Dorsolateral prefrontal cortex (tissue), 120 donors: ENCODE measurements at regions of chr19 and their contacts with region 1.

Region 1: DNA sequence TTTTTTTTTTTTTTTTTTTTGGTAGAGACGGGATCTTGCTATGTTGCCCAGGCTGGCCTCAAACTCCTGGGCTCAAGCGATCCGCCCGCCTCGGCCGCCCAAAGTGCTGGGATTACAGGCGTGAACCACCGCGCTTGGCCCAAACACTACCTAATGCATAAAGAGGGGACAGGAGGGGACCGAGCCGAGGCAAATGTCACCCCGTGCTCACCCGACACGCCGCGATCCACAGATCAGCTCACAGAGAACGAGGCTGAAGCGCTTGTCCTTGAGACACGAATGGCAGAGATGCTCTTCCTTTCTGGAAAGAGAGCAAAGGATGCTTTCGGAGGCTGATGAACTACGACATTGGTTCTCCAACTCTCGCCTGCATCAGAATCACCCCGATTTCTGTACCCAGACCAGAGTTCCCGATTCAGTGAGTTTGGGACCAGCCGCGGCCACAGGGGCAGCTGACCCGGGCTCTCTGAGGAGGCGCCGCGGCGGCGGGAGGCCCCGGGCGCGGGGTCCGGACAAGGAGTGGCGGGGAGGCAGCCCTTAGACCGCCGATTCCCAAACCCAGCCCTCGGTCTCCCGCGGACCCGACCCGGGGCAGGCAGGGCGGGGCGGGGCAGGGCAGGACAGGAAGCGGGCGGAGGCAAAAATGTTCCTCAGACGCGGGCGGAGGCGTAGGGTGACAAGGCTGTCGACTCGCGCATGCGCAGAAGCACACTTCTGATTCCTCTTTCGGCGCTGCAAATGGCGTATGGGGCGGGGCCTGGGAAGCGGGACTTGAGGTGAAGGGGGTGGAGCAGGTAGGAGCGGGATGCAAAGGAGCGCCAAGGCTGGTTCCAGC is at the start of gene ZNF699:
- DNase-seq: peak; percentile 93 to 98 (median 96)
- H3K4me3 ChIP-seq: peak within 1 kb of the TSS; percentile 61 to 100 (median 94)
- H3K27ac ChIP-seq: peak within 1 kb of the TSS; percentile 51 to 98 (median 92)
- H3K27me3 ChIP-seq: no peaks in the 10 kb centered on the region
- CTCF ChIP-seq: peak in 23 of 56 donors; percentile 4 to 49 (median 24)
- total RNA-seq, gene ZNF699: 4.8 to 14.5 (median 8.3) TPM

Region 2: GRCh38 chr19:8988204-8988603 is 321.2 kb before region 1 on chr19:
- intact Hi-C with region 1: no loop called
- DNase-seq: no peak
- H3K4me3 ChIP-seq: no peak overlapping the region
- H3K27ac ChIP-seq: no peak overlapping the region
- H3K27me3 ChIP-seq: peaks cover 0 to 13% (median 0%) of the 10 kb centered on the region in 45 donors
- CTCF ChIP-seq: peak in 3 of 56 donors; percentile 13 to 20 (median 17)

Region 3: DNA sequence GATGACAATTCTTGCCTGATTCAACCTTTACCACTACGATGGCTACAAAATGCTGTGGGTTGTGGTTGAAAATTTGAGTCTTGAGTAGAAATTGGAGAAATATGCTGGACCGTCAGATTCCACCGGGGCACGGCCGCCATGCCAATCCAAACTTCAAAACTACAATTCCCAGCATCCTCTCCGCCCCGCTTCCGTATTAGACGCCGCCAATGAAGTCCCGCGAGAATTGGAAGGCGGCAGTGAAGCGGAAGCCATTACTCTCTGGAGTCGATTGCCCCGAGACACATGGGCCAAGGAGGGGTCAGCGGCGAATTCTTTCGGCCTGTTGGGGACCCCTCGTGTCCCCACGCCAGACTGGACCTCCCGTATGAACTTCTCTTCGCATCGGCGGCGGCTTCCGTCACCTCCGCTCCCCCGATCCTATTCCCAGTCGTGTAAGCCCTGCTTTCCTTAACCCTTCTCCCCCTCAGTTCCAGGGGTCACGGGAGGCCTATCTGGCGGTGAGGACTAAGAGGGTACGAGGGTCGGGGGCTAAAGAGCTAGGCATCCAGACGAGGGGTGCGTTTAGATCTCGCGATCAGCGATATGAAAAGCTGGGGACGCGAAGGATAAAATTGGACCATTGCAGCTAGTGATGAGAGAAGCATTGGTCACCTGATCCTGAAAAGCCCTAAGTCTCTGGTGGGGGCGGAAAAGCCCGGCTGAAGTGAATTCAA is 169.0 kb before region 1 on chr19 and contains the start of gene ZNF317:
- intact Hi-C with region 1: loop called in 1 of 2 experiments (anchors 5 kb)
- DNase-seq: peak; percentile 78 to 97 (median 91)
- H3K4me3 ChIP-seq: peak within 1 kb of the TSS; percentile 65 to 99 (median 91)
- H3K27ac ChIP-seq: peak within 1 kb of the TSS; percentile 35 to 96 (median 86)
- H3K27me3 ChIP-seq: no peaks in the 10 kb centered on the region
- CTCF ChIP-seq: peak in 34 of 56 donors; percentile 12 to 62 (median 32)
- total RNA-seq, gene ZNF317: 22.6 to 39.4 (median 30.9) TPM

Region 4: DNA sequence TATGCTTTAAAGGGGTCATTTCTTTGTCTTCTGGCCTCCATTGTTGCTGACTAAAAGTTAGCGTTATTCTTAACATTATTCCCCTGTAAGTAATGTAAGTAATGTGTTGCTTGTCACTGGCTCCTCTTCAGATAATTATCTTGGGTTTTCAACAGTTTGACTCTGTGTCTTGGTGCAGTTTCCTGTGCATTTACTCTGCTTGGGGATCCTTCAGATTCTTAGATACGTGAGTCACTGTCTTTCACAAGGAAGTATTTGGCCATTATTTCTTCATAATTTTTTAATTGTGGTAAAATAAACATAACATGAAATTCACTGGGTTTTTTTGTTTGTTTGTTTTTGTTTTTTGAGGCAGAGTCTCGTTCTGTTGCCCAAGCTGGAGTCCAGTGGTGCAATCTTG is 144.1 kb before region 1 on chr19:
- intact Hi-C with region 1: no loop called
- DNase-seq: no peak
- H3K4me3 ChIP-seq: no peak overlapping the region
- H3K27ac ChIP-seq: no peak overlapping the region
- H3K27me3 ChIP-seq: no peaks in the 10 kb centered on the region
- CTCF ChIP-seq: no peak

Region 5: DNA sequence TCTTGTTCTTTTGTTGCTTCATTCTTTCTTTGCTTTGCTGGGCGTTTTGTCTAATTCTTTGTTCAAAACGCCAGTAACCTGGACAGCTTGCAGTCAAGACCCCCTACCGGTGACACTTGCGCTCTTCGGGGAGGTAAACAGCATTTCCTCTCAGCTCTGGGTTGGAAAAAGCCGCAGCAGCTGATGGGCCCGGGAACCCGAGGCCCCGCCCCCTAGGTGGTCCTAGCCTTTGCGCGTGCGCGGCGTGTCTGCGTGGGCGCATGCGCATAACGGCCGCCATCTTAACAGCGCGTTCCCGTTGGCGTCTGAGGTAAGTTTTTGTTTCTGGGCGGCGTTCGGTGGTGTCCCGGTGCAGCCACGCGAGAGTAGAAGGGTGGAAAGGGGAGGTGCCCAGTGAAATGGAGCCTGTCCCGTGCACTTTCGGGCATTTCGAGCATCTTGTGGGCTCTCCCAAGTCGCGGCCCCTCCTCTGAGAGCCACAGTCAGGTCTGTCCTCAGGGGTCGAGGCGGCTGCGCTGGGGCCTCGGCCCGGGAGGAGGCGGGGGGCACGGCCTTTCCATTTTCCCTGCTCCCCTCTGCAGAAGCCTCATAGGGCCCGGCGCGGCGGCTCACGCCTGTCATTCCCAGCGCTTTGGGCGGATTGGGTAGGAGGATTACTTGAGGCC is 14.7 kb after region 1 on chr19 and contains the start of gene ZNF559:
- intact Hi-C with region 1: loop called (anchors 1 kb)
- DNase-seq: peak; percentile 76 to 90 (median 84)
- H3K4me3 ChIP-seq: peak within 1 kb of the TSS; percentile 67 to 100 (median 89)
- H3K27ac ChIP-seq: peak within 1 kb of the TSS; percentile 52 to 96 (median 89)
- H3K27me3 ChIP-seq: no peaks in the 10 kb centered on the region
- CTCF ChIP-seq: peak in 39 of 56 donors; percentile 12 to 60 (median 31)
- total RNA-seq, gene ZNF559: 14.4 to 49.0 (median 29.6) TPM

Region 6: GRCh38 chr19:9584073-9584833 is 274.9 kb after region 1 on chr19 and contains the start of gene ZNF121:
- intact Hi-C with region 1: loop called in 1 of 2 experiments (anchors 5 kb)
- DNase-seq: peak; percentile 76 to 94 (median 86)
- H3K4me3 ChIP-seq: peak within 1 kb of the TSS; percentile 58 to 99 (median 88)
- H3K27ac ChIP-seq: peak within 1 kb of the TSS; percentile 51 to 98 (median 93)
- H3K27me3 ChIP-seq: peaks cover 0 to 10% (median 0%) of the 10 kb centered on the region in 45 donors
- CTCF ChIP-seq: peak in 30 of 56 donors; percentile 11 to 56 (median 27)
- total RNA-seq, gene ZNF121: 16.5 to 34.9 (median 23.7) TPM

Region 7: DNA sequence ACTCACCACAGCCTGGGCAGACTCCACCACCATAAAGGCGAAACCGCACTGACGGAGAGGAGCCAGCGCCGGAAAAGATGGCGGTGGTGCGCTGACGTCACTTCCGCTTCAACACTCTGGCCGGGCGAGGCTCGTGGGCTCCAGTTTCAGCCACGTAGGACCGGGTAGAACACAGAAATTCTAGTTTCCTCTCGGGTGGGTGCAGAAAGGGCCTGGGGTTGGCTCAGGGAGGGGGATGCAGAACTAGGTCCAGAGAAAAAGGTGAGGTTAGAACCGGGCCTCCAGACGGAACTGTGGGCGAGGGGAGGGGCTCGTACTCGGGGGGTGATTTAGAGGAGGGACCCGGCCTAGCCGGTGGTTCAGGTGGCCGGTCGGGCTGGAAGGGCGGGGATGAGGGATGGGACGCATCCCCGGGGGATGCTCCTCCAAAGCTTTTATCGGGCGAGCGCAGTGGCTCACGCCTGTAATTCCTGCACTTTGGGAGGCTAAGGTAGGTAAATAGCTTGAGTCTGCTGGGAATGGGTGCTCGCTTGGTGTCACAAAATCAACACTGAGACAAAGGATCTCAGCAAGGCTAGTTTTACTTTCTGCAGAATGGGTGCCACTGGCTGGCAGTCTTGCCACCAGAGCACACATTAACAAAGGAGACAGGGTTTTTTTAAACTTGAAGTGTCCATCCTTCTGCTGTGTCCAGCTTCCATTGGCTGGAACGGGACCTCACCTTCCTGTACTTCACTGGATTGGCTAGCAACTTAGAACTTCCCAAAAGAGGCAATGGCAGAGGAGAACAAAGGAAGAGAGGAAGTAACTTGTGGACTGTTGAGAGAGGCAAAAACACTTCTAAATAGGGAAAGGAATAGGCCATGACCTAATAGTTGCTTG is 312.0 kb after region 1 on chr19 and contains the start of gene ZNF561:
- intact Hi-C with region 1: loop called in 1 of 2 experiments (anchors 5 kb)
- DNase-seq: peak; percentile 79 to 90 (median 86)
- H3K4me3 ChIP-seq: peak within 1 kb of the TSS; percentile 55 to 99 (median 93)
- H3K27ac ChIP-seq: peak within 1 kb of the TSS; percentile 51 to 99 (median 95)
- H3K27me3 ChIP-seq: no peaks in the 10 kb centered on the region
- CTCF ChIP-seq: peak in 19 of 56 donors; percentile 5 to 47 (median 21)
- total RNA-seq, gene ZNF561: 15.0 to 38.5 (median 25.3) TPM